ENCODE measurements at regions of chr16 and their contacts with region 1.

Region 1: GRCh38 chr16:89502319-89502878 is 5.8 kb upstream of the SPG7 start:
- DNase-seq: no peak

Region 2: DNA sequence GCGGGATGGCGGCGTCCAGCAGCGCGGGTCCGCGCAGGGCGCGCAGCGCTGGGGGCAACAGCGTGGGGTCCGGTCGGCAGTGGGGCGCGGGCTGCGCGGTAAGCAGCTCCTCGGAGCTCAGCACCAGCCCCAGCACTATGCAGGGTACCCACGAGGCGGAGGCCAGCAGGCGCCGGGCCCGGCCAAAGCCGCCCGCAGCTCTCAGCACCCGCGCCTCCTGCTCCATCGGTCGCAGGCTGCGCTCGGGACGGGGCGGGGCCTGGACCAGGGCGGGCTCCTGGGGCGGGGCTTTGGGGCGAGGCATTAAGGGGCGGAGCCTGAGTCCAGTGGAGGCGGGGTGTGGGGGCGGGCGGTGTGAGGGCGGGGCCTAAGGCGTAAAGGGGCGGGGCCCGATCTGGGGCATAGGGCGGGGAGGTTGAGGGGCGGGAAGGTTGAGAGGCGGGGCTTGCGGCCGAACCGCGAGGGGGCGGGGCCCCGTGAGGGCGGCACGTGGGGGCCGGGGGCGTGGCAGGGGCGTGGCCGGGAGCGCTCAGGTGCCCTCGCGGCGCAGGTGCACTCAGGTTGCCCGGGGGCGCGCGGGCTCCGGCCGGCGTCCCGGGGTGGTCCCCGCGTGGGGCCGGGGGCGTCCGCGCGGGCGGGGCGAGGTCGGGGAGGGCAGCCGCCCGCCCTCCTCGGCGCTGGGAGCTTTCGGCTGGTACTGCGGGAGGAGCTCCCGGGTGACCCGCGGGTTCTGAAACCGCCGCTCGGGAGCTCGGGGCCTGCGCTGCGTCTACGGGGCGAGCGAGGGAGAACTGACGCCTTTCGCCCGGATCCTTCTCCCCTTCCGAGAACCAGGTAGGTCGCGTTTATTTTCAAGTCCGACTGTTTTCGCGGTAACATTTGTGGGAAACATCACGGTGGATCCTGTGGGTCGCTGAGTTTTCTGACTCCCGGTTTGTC is 300.7 kb before region 1 on chr16:
- intact Hi-C with region 1: no loop called
- DNase-seq: peak; percentile 94

Region 3: GRCh38 chr16:89319883-89320781 is 182.3 kb before region 1 on chr16:
- intact Hi-C with region 1: loop called in 1 of 2 experiments (anchors 5 kb)
- DNase-seq: peak; percentile 90